Caco-2 (cell line): ENCODE measurements at regions of chr17 and their contacts with region 1.

Region 1: DNA sequence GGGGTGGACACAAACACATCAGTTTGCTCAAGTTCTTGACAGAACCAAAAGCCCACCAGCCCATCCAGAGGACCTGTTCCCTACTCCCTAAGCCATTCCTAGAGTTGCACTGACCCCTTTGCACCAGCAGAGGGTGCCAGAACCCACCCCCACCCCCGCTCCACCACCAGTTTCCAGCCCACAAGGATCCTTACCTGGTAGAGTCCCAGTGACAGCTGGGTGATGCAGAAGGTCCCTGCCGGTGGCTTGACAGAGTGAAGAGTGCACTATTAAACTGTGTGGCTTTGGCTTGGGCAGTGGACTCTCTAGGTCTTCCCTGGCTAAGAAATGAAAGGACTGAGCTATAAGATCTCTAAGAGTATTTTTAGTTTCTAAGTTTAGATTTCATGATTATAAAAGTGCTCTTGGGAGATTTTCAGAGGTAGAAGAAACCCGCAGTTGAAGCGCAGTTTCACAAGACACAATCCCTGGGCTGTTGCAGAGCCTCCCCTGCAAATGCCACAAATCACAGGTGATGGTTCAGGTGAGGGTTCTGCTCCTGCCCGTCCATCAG is 73.3 kb upstream of the MTMR4 start:
- DNase-seq: peak; percentile 74 to 79
- H3K4me3 ChIP-seq: no peak overlapping the region
- H3K4me3 Mint-ChIP-seq: no peak overlapping the region
- H3K27ac Mint-ChIP-seq: no peak overlapping the region
- H3K4me1 ChIP-seq: no peaks in the 10 kb centered on the region
- H3K4me1 Mint-ChIP-seq: no peaks in the 10 kb centered on the region
- H3K27me3 ChIP-seq: no peaks in the 10 kb centered on the region
- H3K27me3 Mint-ChIP-seq: peaks cover 5% of the 10 kb centered on the region
- CTCF ChIP-seq: peak; percentile 93 to 98

Region 2: DNA sequence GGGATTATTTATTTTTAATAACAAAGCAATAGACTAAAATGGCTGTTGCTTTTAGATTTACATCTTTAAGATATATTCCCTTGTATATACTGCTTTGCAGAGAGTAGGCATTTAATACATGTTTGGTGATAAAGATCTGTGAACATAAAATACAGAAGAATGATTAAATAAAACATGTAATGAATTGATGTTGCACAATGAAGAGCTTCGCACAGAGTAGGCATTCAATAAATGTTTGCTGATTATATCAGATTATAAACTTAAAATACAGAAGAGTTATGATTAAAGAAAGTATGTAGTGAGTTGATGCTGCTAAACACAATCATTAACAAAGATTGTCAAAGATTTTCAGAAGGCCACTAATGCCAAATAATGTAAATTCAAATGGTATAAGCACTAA is 124.0 kb before region 1 on chr17:
- CTCF ChIA-PET with region 1: no interaction called
- POLR2A ChIA-PET with region 1: no interaction called
- intact Hi-C with region 1: no loop called
- DNase-seq: no peak
- H3K4me3 ChIP-seq: no peak overlapping the region
- H3K4me3 Mint-ChIP-seq: no peak overlapping the region
- H3K27ac Mint-ChIP-seq: no peak overlapping the region
- H3K4me1 ChIP-seq: no peaks in the 10 kb centered on the region
- H3K4me1 Mint-ChIP-seq: no peaks in the 10 kb centered on the region
- H3K27me3 ChIP-seq: no peaks in the 10 kb centered on the region
- H3K27me3 Mint-ChIP-seq: no peaks in the 10 kb centered on the region
- CTCF ChIP-seq: no peak

Region 3: DNA sequence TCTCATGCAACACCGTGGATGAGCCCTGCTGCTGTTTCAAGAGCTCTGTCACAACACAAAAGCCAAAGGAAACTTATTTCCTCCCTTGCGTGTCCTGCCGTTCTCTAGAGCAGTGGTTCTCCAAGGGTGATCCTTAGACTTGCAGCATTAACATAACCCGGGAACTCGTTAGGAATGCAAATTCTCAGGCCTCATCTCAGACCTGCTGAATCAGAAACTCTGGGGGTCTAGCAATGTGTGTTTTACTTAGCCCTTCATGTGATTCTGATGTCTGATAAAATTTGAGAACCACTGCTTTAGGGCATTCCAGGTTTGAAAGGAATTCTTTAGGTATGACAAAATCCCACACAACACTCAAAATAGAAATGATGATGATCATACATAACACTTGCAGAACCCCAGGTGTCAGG is 22.0 kb before region 1 on chr17:
- CTCF ChIA-PET with region 1: no interaction called
- POLR2A ChIA-PET with region 1: no interaction called
- intact Hi-C with region 1: no loop called
- DNase-seq: no peak
- H3K4me3 ChIP-seq: no peak overlapping the region
- H3K4me3 Mint-ChIP-seq: no peak overlapping the region
- H3K27ac Mint-ChIP-seq: no peak overlapping the region
- H3K4me1 ChIP-seq: no peaks in the 10 kb centered on the region
- H3K4me1 Mint-ChIP-seq: no peaks in the 10 kb centered on the region
- H3K27me3 ChIP-seq: no peaks in the 10 kb centered on the region
- H3K27me3 Mint-ChIP-seq: no peaks in the 10 kb centered on the region
- CTCF ChIP-seq: no peak

Region 4: GRCh38 chr17:58621174-58621573 is 33.4 kb after region 1 on chr17:
- CTCF ChIA-PET with region 1: no interaction called
- POLR2A ChIA-PET with region 1: no interaction called
- intact Hi-C with region 1: loop called (anchors 2 kb)
- DNase-seq: no peak
- H3K4me3 ChIP-seq: no peak overlapping the region
- H3K4me3 Mint-ChIP-seq: no peak overlapping the region
- H3K27ac Mint-ChIP-seq: no peak overlapping the region
- H3K4me1 ChIP-seq: 0 out of 2 replicates have a peak, but pooled peaks cover 4% of the 10 kb centered on the region
- H3K4me1 Mint-ChIP-seq: peaks cover 10% of the 10 kb centered on the region
- H3K27me3 ChIP-seq: no peaks in the 10 kb centered on the region
- H3K27me3 Mint-ChIP-seq: no peaks in the 10 kb centered on the region
- CTCF ChIP-seq: no peak